PC-9 (cell line): ENCODE measurements at regions of chr13 and their contacts with region 1.

Region 1: DNA sequence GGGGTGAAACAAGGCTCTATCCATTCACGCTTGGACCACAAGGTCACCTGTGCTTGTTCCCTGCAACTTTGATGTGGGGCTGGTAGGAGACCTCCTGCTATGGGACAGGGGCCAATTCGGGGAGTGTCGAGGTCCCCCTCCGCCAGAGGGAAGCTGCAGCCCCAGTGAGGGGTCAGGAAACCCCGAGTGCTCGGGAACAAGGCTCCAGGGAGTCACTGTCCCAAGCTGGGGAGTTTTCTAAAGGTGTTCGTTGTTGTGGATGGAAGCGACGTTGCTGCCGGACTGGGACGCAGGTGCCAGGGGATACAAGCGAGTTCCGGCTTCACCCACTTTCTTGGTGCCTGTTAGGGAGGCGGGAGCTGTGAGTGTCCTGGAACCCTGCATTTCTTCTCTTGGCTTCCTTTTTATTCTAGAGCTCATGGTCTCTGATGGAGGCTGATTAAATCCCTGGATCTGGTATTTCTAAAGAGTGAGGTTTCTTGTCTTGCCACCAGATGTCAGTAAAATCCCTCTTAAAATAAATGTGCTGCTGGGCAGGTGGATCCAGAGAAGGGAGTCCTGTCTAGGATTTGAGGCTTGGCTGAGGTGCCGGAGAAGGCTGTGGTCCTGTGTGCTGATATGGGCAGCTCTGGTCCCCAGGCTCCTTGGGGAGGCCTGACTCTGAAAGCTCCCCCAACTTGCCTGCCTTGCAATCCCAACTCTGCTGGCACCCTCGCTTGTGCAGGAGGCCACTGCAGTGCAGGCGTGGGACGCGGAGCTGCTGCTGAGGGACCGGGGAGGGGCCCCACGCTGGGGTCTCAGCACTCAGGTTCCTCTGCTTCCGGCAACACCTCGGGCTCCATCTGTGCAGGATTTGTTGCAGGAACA is 153.9 kb downstream of the TEX29 start:
- DNase-seq: peak; percentile 7 to 53
- H3K4me3 ChIP-seq: no peak overlapping the region
- H3K27ac ChIP-seq: no peak overlapping the region
- H3K4me1 ChIP-seq: no peaks in the 10 kb centered on the region
- H3K27me3 ChIP-seq: peaks cover 87% of the 10 kb centered on the region
- CTCF ChIP-seq: peak; percentile 81

Region 2: GRCh38 chr13:111429064-111429558 is 45.3 kb before region 1 on chr13:
- CTCF ChIA-PET with region 1: no interaction called
- POLR2A ChIA-PET with region 1: no interaction called
- intact Hi-C with region 1: no loop called
- DNase-seq: peak; percentile 12 to 40
- H3K4me3 ChIP-seq: no peak overlapping the region
- H3K27ac ChIP-seq: no peak overlapping the region
- H3K4me1 ChIP-seq: no peaks in the 10 kb centered on the region
- H3K27me3 ChIP-seq: peaks cover 78% of the 10 kb centered on the region
- CTCF ChIP-seq: peak; percentile 82

Region 3: GRCh38 chr13:111549464-111549863 is 75.1 kb after region 1 on chr13:
- CTCF ChIA-PET with region 1: no interaction called
- POLR2A ChIA-PET with region 1: no interaction called
- intact Hi-C with region 1: no loop called
- DNase-seq: no peak
- H3K4me3 ChIP-seq: no peak overlapping the region
- H3K27ac ChIP-seq: no peak overlapping the region
- H3K4me1 ChIP-seq: no peaks in the 10 kb centered on the region
- H3K27me3 ChIP-seq: peaks cover 66% of the 10 kb centered on the region
- CTCF ChIP-seq: no peak

Region 4: DNA sequence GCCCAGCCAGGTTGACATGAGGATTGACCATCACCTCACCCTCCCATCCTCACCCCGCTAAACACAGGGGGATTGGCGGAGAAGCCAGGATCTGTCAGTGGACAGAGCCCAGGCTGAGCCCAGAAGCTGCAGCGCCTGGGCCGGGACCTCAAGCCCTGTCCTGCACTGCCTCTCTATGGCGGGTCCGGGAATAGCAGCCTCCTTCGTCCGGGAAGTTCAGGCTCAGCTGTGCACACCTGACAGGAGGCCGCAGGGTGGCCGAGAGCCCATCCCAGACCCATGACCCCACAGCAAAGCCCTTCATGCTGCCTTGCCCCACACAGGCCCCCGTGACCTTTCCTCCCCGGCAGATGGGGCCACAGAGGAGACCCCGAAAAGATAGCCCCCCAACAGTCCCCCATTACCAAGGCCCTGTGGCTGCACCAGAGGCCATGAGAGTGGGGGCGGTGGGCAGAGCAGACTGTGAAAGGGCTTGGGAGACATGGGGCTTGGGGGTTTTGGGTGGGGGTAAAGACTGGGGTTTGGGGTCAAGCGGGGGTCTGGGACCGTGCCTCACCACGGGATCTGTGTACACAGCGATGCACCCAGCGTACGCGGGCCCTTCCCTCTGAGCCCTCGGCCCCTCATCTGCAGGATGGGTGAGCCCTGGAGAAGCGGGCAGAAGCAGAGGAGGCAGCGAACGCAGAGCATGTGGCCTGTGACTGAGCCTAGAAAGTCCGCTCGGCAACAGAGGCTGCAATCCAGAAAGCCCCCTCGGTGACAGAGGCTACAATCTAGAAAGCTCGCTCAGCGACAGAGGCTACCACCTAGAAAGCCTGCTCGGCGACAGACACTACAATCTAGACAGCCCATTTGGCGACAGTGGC is 969.9 kb after region 1 on chr13:
- CTCF ChIA-PET with region 1: interaction called, 3 read pairs
- POLR2A ChIA-PET with region 1: no interaction called
- intact Hi-C with region 1: loop called (anchors 1 kb)
- DNase-seq: peak; percentile 60 to 70
- H3K4me3 ChIP-seq: no peak overlapping the region
- H3K27ac ChIP-seq: no peak overlapping the region
- H3K4me1 ChIP-seq: no peaks in the 10 kb centered on the region
- H3K27me3 ChIP-seq: peaks cover 95% of the 10 kb centered on the region
- CTCF ChIP-seq: peak; percentile 94